ENCODE measurements at regions of chr6 and their contacts with region 1.

Region 1: DNA sequence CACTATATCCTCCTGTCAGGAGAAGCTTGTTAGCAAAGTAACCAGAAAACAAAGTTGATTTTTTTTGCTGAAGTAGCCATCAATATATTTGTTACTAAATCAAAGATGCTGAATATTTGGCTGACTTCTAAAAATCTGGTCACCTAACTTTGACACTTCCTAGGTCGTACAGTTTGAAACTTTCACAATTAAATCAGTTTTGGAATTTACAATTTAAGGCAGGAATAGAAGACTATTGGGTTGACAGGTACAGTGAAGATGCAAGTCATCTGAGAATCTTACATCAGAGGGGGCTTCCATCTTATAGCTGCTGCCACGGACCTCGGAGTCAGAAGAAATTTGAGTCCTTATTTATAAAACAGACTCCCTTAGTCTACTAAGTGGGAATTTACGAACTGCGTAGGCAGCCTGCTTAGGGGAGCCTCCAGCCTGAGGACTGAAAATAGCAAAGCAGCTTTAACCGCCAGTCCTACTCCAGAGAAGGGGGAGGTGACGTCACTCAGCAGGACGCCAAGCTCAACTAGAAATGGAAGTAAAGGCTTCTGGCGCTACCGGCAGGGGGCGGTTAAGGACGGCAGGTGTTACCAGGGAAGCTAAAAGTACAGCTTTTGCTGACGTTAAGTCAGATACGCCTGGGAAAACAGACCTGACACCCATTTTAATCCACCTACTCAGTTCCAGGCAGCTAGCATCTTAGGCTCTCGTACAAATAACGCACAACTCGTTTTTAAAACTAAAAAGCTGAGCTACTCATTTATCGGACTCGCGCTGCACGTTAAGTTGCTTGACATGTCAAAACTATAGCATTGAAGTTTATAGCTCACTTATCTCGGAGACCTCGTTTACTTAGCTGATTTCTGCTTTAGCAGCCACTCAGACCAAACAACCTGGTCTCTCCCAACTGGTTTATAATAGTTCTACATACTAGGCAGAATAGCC is 61.1 kb upstream of the HFE start:
- DNase-seq: peak; percentile 97
- ATAC-seq: peak; percentile 68
- H3K4me3 ChIP-seq: peak overlapping the region; percentile 59 to 80 (median 71)
- H3K27ac ChIP-seq: peak overlapping the region; percentile 93
- H3K4me1 ChIP-seq: peaks cover 62% of the 10 kb centered on the region
- H3K27me3 ChIP-seq: no peaks in the 10 kb centered on the region; a peak in 1 of 5 replicates
- CTCF ChIP-seq: peak; percentile 95
- EP300 ChIP-seq: peak in 1 of 2 experiments; percentile 54; a peak in 2 of 4 replicates
- POLR2A ChIP-seq: peak in 1 of 2 experiments; percentile 28; a peak in 1 of 4 replicates
- RAD21 ChIP-seq: peak; percentile 77

Region 2: DNA sequence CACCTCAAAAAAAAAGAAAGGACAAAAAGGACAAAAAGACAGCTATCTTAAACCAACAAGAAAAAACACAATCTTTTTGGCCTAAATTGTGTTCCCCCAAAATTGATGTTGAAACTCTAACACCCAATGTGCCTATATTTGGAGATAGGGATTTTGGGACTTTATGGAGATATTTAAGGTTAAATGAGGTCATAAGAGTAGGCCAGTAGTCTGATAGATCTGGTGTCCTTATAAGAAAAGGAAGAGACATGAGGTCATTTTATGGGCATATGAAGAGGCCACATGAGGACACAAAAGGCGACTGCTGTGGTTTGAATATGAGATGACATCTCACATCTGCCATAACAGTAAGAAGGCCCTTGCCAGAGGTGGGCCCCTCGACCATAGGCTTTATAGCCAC is 14.1 kb before region 1 on chr6:
- CTCF ChIA-PET with region 1: no interaction called
- POLR2A ChIA-PET with region 1: interaction called, 7 read pairs
- in situ Hi-C with region 1: no loop called
- intact Hi-C with region 1: loop called (anchors 1 kb)
- DNase-seq: no peak
- ATAC-seq: no peak
- H3K4me3 ChIP-seq: no peak overlapping the region
- H3K27ac ChIP-seq: no peak overlapping the region
- H3K4me1 ChIP-seq: peaks cover 23% of the 10 kb centered on the region
- H3K27me3 ChIP-seq: no peaks in the 10 kb centered on the region
- CTCF ChIP-seq: no peak
- EP300 ChIP-seq: no peak
- POLR2A ChIP-seq: no peak
- RAD21 ChIP-seq: no peak

Region 3: GRCh38 chr6:26054857-26055669 is 28.9 kb after region 1 on chr6:
- CTCF ChIA-PET with region 1: no interaction called
- POLR2A ChIA-PET with region 1: interaction called, 14 read pairs
- in situ Hi-C with region 1: no loop called
- intact Hi-C with region 1: loop called (anchors 1 kb)
- DNase-seq: peak; percentile 97
- ATAC-seq: peak; percentile 82
- H3K4me3 ChIP-seq: peak overlapping the region; percentile 69 to 85 (median 85)
- H3K27ac ChIP-seq: peak overlapping the region; percentile 90
- H3K4me1 ChIP-seq: peaks cover 26% of the 10 kb centered on the region
- H3K27me3 ChIP-seq: no peaks in the 10 kb centered on the region; a peak in 1 of 5 replicates
- CTCF ChIP-seq: peak; percentile 32; the same call in 1 of the 2 replicates
- EP300 ChIP-seq: peak in 1 of 2 experiments; percentile 27; a peak in 1 of 4 replicates
- POLR2A ChIP-seq: peak; percentile 79 to 98; a peak in 3 of 4 replicates
- RAD21 ChIP-seq: peak; percentile 50

Region 4: DNA sequence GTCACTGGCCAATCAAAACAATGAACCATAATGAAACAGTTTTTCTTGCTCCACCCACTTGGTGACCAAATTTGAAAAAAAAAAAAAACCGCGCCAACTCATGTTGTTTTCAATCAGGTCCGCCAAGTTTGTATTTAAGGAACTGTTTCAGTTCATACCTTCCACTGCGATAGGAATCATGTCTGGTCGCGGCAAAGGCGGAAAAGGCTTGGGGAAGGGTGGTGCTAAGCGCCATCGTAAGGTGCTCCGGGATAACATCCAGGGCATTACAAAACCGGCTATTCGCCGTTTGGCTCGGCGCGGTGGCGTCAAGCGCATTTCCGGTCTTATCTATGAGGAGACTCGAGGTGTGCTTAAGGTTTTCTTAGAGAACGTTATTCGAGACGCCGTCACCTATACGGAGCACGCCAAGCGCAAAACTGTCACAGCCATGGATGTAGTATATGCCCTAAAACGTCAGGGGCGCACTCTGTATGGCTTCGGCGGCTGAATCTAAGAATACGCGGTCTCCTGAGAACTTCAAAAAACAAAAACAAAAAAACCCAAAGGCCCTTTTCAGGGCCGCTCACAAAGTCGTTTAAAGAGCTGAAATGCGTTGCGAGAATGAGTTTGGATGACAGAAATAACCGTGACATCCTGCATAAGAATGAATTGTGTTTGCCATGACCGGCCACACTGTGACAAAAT is 77.8 kb after region 1 on chr6:
- CTCF ChIA-PET with region 1: no interaction called
- POLR2A ChIA-PET with region 1: interaction called, 43 read pairs
- in situ Hi-C with region 1: no loop called
- intact Hi-C with region 1: no loop called
- DNase-seq: peak; percentile 96
- ATAC-seq: peak; percentile 84
- H3K4me3 ChIP-seq: peak overlapping the region; percentile 64 to 79 (median 74)
- H3K27ac ChIP-seq: peak overlapping the region; percentile 92
- H3K4me1 ChIP-seq: peaks cover 29% of the 10 kb centered on the region
- H3K27me3 ChIP-seq: no peaks in the 10 kb centered on the region; a peak in 1 of 5 replicates
- CTCF ChIP-seq: peak; percentile 45
- EP300 ChIP-seq: peak; percentile 69 to 96; a peak in 3 of 4 replicates
- POLR2A ChIP-seq: peak; percentile 98 to 99
- RAD21 ChIP-seq: peak; percentile 52; the same call in 1 of the 2 replicates

Region 5: GRCh38 chr6:26196846-26197648 is 170.9 kb after region 1 on chr6:
- CTCF ChIA-PET with region 1: no interaction called
- POLR2A ChIA-PET with region 1: interaction called, 50 read pairs
- in situ Hi-C with region 1: no loop called
- intact Hi-C with region 1: no loop called
- DNase-seq: peak; percentile 93
- ATAC-seq: peak; percentile 66
- H3K4me3 ChIP-seq: peak overlapping the region; percentile 81 to 90 (median 87)
- H3K27ac ChIP-seq: peak overlapping the region; percentile 94
- H3K4me1 ChIP-seq: peaks cover 30% of the 10 kb centered on the region
- H3K27me3 ChIP-seq: no peaks in the 10 kb centered on the region; a peak in 1 of 5 replicates
- CTCF ChIP-seq: peak; percentile 60
- EP300 ChIP-seq: peak; percentile 34 to 41; a peak in 2 of 4 replicates
- POLR2A ChIP-seq: peak; percentile 99
- RAD21 ChIP-seq: peak; percentile 53

Region 6: GRCh38 chr6:27838058-27838944 is 1812.1 kb after region 1 on chr6:
- CTCF ChIA-PET with region 1: no interaction called
- POLR2A ChIA-PET with region 1: interaction called, 10 read pairs
- in situ Hi-C with region 1: no loop called
- intact Hi-C with region 1: no loop called
- DNase-seq: peak; percentile 100
- ATAC-seq: peak; percentile 87
- H3K4me3 ChIP-seq: peak overlapping the region; percentile 79 to 84 (median 83)
- H3K27ac ChIP-seq: peak overlapping the region; percentile 92
- H3K4me1 ChIP-seq: peaks cover 34% of the 10 kb centered on the region
- H3K27me3 ChIP-seq: no peaks in the 10 kb centered on the region; a peak in 1 of 5 replicates
- CTCF ChIP-seq: no peak
- EP300 ChIP-seq: 0 out of 4 replicates have a peak, but pooled peaks of 1 of the 2 experiments have one; percentile 6
- POLR2A ChIP-seq: peak; percentile 82 to 99
- RAD21 ChIP-seq: no peak; the same call in 1 of the 2 replicates